Breast epithelium (tissue), 4 donors: ENCODE measurements at regions of chr11 and their contacts with region 1.

Region 1: GRCh38 chr11:76734456-76735420 is 48.4 kb upstream of the TSKU start:
- DNase-seq: no peak
- H3K4me3 ChIP-seq: no peak overlapping the region
- H3K27ac ChIP-seq: no peak overlapping the region
- H3K4me1 ChIP-seq: no peaks in the 10 kb centered on the region
- H3K27me3 ChIP-seq: no peaks in the 10 kb centered on the region
- CTCF ChIP-seq: no peak
- POLR2A ChIP-seq: no peak

Region 2: GRCh38 chr11:76664578-76665061 is 70.1 kb before region 1 on chr11:
- intact Hi-C with region 1: no loop called
- DNase-seq: peak in 1 of 2 donors; percentile 41
- H3K4me3 ChIP-seq: no peak overlapping the region
- H3K27ac ChIP-seq: peak overlapping the region in 1 of 2 donors; percentile 68
- H3K4me1 ChIP-seq: peaks cover 0 to 7% of the 10 kb centered on the region in 2 donors
- H3K27me3 ChIP-seq: peaks cover 0 to under 1% of the 10 kb centered on the region in 2 donors
- CTCF ChIP-seq: no peak
- POLR2A ChIP-seq: no peak

Region 3: GRCh38 chr11:76793834-76794291 is 59.1 kb after region 1 on chr11:
- intact Hi-C with region 1: loop called (anchors 1 kb)
- DNase-seq: peak in 1 of 2 donors; percentile 17
- H3K4me3 ChIP-seq: peak overlapping the region in 1 of 3 donors; percentile 43
- H3K27ac ChIP-seq: peak overlapping the region; percentile 57 to 72
- H3K4me1 ChIP-seq: peaks cover 8 to 34% of the 10 kb centered on the region in 2 donors
- H3K27me3 ChIP-seq: no peaks in the 10 kb centered on the region
- CTCF ChIP-seq: no peak
- POLR2A ChIP-seq: no peak